ENCODE measurements at regions of chr1 and their contacts with region 1.

Region 1: DNA sequence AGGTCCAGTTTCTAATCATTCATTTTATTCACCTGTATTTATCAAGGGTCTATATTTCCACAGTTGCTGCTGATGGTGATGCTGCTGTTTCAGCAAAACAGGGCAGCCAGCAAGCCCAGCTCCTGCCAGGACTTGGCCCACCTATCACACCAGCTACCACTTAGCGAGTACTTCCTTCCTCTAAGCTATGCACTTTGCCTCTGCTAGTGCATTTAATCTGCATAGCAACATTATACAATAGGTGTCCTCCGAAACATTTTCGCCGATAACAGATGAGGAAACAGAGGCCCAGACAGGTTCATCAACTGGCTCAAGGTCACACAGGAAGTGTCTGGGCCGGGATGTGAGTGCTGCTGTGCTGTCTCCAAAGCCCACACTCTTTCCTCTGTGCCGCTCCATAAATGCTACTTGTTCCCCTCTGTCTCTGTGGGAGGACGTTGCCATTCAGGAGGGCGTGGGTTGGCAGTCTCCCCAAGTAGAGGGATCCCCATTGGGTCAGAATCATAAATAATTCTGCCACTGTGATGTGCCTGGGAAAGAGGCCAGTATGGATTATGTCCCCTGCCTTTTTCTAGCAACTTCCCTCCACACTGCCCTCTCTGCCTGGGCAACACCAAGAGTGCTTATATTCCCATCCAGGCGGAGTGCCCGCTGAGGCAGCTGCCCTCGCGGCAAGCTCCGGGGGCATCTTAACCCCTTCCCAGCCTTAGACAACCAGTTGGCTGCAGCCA is 9.4 kb upstream of the PLEKHA6 start:
- DNase-seq: no peak
- H3K4me3 ChIP-seq: no peak overlapping the region
- H3K27ac ChIP-seq: no peak overlapping the region
- H3K4me1 ChIP-seq: peaks cover 0 to 7% (median 2%) of the 10 kb centered on the region in 4 donors
- H3K27me3 ChIP-seq: no peaks in the 10 kb centered on the region
- CTCF ChIP-seq: no peak
- EP300 ChIP-seq: no peak
- POLR2A ChIP-seq: no peak

Region 2: GRCh38 chr1:204162231-204163074 is 206.7 kb before region 1 on chr1:
- in situ Hi-C with region 1: loop called (anchors 5 to 10 kb)
- intact Hi-C with region 1: loop called (anchors 2 kb)
- DNase-seq: peak; percentile 88
- H3K4me3 ChIP-seq: no peak overlapping the region
- H3K27ac ChIP-seq: no peak overlapping the region
- H3K4me1 ChIP-seq: peaks cover 0 to 5% (median 0%) of the 10 kb centered on the region in 4 donors
- H3K27me3 ChIP-seq: peaks cover 11% of the 10 kb centered on the region
- CTCF ChIP-seq: peak; percentile 98 to 100 (median 98)
- EP300 ChIP-seq: no peak
- POLR2A ChIP-seq: no peak

Region 3: GRCh38 chr1:204219971-204220608 is 149.1 kb before region 1 on chr1:
- in situ Hi-C with region 1: loop called in 1 of 4 experiments (anchors 10 kb)
- intact Hi-C with region 1: loop called (anchors 1 kb)
- DNase-seq: no peak
- H3K4me3 ChIP-seq: no peak overlapping the region
- H3K27ac ChIP-seq: no peak overlapping the region
- H3K4me1 ChIP-seq: no peaks in the 10 kb centered on the region
- H3K27me3 ChIP-seq: no peaks in the 10 kb centered on the region
- CTCF ChIP-seq: no peak
- EP300 ChIP-seq: no peak
- POLR2A ChIP-seq: no peak